Activated CD4-positive, alpha-beta memory T cell treated with anti-CD3 and anti-CD28 coated beads for 36 hours (primary cell): ENCODE measurements at regions of chr17 and their contacts with region 1.

Region 1: DNA sequence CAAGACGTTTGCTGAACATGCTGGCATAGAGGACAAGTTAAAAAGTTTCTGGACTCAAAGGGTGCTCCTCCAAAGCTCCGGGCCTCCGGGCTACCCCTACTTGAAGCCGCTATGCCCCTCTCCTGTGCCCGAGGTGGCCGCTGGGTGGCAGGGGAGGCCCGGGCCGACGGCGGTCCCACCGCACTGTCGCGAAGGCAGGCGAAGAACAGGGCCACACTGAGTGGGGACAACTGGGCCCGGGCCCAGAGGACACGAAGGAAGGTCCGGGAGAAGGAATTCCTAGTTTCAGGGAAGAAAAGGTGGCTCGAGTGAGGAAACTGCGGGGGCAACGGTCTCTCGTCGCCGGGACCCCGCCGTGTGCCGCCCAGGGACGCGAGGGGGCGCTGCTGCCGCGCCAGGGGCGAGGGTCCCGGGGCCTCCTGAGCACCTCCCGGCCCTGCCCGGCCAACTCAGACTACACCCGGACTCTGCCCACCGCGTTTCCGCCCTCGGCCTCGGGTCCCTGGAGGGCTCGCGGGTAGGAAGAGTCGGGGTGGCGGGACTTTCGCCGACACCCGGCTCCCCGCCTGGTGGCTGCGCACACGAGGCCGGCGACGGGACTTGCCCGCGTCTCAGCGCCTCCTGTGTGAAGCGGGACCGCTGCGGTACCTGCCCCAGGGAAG is 885 bp upstream of the CHCT1 start:
- DNase-seq: peak; percentile 86
- H3K4me3 Mint-ChIP-seq: peak overlapping the region; percentile 64
- H3K27ac Mint-ChIP-seq: no peak overlapping the region
- H3K4me1 Mint-ChIP-seq: peaks cover 8% of the 10 kb centered on the region
- H3K27me3 Mint-ChIP-seq: peaks cover 2% of the 10 kb centered on the region

Region 2: GRCh38 chr17:60383379-60383778 is 38.0 kb before region 1 on chr17:
- CTCF ChIA-PET with region 1: no interaction called
- POLR2A ChIA-PET with region 1: no interaction called
- intact Hi-C with region 1: no loop called
- DNase-seq: no peak
- H3K4me3 Mint-ChIP-seq: no peak overlapping the region
- H3K27ac Mint-ChIP-seq: no peak overlapping the region
- H3K4me1 Mint-ChIP-seq: peaks cover 20% of the 10 kb centered on the region
- H3K27me3 Mint-ChIP-seq: no peaks in the 10 kb centered on the region

Region 3: DNA sequence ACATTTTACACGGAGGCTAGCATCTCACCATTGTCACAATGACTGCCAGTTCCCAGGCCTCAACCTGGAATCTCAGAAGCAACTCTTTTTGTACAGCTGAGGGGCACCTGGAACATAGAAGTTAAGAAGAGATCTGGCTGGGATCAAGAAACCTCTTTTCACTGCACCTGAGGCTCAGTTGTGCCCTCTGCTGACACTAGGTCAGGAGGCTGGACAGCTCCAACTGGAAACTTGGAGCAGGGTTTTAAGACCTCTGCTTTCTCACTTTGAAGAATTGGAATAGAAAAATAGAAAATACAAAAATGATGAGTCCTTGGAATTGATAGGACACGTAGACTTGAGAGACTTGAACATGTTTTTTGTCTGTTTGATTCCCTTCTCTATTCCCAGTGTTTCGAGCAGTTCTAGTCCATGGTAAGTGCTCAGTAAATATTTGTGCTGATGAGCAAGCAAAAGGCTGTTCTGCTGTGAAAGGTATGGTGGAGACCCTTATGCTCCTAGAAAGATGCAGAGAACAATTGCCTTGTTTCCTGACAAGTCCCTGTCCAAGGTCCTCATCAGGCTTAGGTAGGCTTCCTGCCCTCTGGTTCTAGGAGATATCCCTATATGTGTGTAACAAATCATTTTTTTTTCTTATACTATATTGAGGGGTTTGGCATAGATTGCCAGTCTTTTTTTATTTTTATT is 165.0 kb after region 1 on chr17:
- CTCF ChIA-PET with region 1: no interaction called
- POLR2A ChIA-PET with region 1: no interaction called
- intact Hi-C with region 1: loop called (anchors 10 kb)
- DNase-seq: peak; percentile 12
- H3K4me3 Mint-ChIP-seq: no peak overlapping the region
- H3K27ac Mint-ChIP-seq: no peak overlapping the region
- H3K4me1 Mint-ChIP-seq: no peaks in the 10 kb centered on the region
- H3K27me3 Mint-ChIP-seq: peaks cover 4% of the 10 kb centered on the region